Endothelial cell of umbilical vein (primary cell): ENCODE measurements at regions of chr1 and their contacts with region 1.

Region 1: GRCh38 chr1:62643283-62643682 is 44.9 kb downstream of the DOCK7 start:
- DNase-seq: no peak
- H3K4me3 ChIP-seq: no peak overlapping the region
- H3K27ac ChIP-seq: no peak overlapping the region
- H3K4me1 ChIP-seq: no peaks in the 10 kb centered on the region
- H3K27me3 ChIP-seq: no peaks in the 10 kb centered on the region
- CTCF ChIP-seq: no peak
- POLR2A ChIP-seq: no peak

Region 2: GRCh38 chr1:62676611-62677356 is 33.5 kb after region 1 on chr1:
- CTCF ChIA-PET with region 1: no interaction called
- POLR2A ChIA-PET with region 1: no interaction called
- dilution Hi-C with region 1: no loop called
- intact Hi-C with region 1: loop called (anchors 5 kb)
- DNase-seq: no peak
- H3K4me3 ChIP-seq: no peak overlapping the region
- H3K27ac ChIP-seq: no peak overlapping the region
- H3K4me1 ChIP-seq: no peaks in the 10 kb centered on the region
- H3K27me3 ChIP-seq: no peaks in the 10 kb centered on the region
- CTCF ChIP-seq: no peak
- POLR2A ChIP-seq: no peak